Ascending aorta (tissue), 2 donors: ENCODE measurements at regions of chrX and their contacts with region 1.

Region 1: GRCh38 chrX:111445486-111445885 is 33.5 kb upstream of the DCX start:
- DNase-seq: no peak
- H3K4me3 ChIP-seq: no peak overlapping the region
- H3K27ac ChIP-seq: no peak overlapping the region
- H3K4me1 ChIP-seq: no peaks in the 10 kb centered on the region
- H3K27me3 ChIP-seq: no peaks in the 10 kb centered on the region
- CTCF ChIP-seq: peak in 2 of 3 experiments; percentile 51 to 52

Region 2: GRCh38 chrX:111168314-111168713 is 277.2 kb before region 1 on chrX:
- intact Hi-C with region 1: loop called (anchors 10 kb)
- DNase-seq: no peak
- H3K4me3 ChIP-seq: no peak overlapping the region
- H3K27ac ChIP-seq: no peak overlapping the region
- H3K4me1 ChIP-seq: no peaks in the 10 kb centered on the region
- H3K27me3 ChIP-seq: no peaks in the 10 kb centered on the region
- CTCF ChIP-seq: peak in 1 of 3 experiments; percentile 10